Astrocyte of the cerebellum (primary cell): ENCODE measurements at regions of chr11 and their contacts with region 1.

Region 1: GRCh38 chr11:19370100-19370861 is 129.5 kb upstream of the E2F8 start:
- DNase-seq: peak; percentile 15
- H3K4me3 ChIP-seq: no peak overlapping the region
- CTCF ChIP-seq: no peak

Region 2: DNA sequence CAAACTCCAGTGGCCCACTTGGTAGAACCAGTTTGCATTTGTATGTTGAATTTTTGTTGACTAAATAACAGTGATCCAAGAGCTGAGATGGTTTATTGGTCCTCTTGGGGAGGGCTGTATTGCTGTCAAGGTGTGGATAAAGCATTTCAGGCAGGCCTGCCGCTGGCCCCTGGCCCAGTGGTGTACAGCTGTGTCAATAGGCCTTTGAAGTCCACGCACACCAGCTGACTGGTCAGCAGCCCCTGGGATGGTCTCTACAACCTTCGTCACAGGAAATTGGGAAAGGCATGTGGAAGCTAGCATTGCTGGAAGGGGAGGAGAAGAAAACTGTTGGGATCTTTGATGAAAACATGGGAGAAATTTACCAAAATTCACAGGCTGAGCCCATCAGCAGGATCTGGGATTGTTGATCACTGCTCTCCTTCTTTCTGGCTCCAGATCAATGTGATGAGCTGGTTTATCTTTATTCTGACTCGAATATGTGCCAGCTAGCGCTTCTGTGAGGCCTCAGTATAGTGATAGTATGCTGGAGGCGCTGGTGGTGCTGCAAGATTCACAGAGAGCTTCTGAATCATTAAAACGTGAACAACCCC is 117.0 kb before region 1 on chr11:
- in situ Hi-C with region 1: no loop called
- DNase-seq: no peak
- H3K4me3 ChIP-seq: no peak overlapping the region
- CTCF ChIP-seq: no peak

Region 3: GRCh38 chr11:19301361-19301760 is 68.9 kb before region 1 on chr11:
- in situ Hi-C with region 1: no loop called
- DNase-seq: no peak
- H3K4me3 ChIP-seq: no peak overlapping the region
- CTCF ChIP-seq: no peak

Region 4: DNA sequence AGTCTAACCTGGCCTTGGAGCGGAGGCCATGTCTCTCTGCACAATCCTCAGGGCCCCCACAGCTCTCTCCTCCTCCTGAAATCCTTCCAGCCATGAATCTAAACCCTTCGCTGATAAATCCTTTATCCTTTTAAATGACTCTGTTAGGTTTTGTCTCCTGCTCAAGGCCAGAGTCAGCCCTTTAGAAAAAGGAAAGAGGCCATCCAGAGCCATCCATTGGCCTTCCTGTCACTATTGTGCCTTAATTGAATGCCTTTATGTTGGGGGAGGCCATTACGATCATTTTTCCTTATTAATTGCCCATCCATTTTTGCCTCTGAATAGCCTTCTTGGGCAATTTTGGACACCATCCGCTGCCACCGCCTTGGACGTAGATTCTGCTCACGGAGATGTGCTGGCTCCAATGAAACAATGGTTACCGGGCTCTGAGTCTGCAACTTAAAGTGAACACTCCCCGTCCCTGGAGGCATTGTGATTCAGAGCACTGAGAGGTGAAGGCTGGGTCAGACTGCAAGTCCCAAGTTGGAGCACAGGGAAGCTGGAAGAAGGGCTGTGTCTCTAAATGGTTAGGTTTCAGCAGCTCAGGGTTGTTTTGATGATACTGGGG is 83.5 kb after region 1 on chr11:
- in situ Hi-C with region 1: no loop called
- DNase-seq: no peak
- H3K4me3 ChIP-seq: no peak overlapping the region
- CTCF ChIP-seq: no peak

Region 5: DNA sequence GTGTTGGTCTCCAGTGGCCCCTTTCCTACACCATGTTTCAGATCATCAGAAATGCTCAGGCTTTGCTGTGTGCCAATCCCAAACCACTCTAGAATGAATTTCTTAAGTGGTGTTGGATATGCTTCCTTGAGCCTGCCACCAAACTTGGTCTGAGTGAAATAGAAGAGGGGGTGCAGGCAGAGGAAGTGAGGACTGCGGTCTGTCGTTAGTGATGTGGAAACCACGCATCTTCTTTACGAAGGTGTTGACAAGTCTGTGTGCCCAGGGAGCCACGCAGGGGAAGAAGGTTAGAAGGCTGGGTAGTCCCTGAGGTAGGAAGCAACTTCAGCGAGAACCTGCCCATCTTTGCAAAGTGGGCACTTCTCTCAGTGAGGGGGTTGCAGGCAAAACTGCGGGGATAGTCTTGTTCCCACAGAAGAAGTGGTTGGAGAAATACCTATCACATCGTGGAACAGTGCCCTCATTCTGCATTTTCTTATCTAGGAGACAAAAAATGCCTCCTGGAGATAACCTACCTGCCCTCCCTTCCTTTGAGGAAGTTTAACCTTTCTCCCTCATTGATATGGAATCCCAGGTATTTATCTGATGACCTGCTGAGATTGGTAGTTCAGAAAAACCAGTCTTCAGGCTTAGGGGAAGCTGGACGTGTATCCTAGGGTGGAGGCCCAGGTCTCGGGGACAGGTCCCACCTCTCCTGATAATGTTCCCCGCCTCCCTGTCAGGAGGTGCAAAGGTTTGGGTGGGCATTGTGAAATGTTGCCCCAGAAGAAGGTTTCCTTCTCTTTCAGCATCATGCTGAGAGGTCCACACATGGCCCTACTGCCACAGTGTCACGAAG is 155.2 kb after region 1 on chr11:
- in situ Hi-C with region 1: loop called (anchors 25 kb)
- DNase-seq: no peak
- H3K4me3 ChIP-seq: no peak overlapping the region
- CTCF ChIP-seq: no peak